ENCODE measurements at regions of chr1 and their contacts with region 1.

Region 1: GRCh38 chr1:41573785-41574713 is 89.6 kb upstream of the EDN2 start:
- DNase-seq: peak; percentile 34
- H3K4me3 ChIP-seq: no peak overlapping the region
- CTCF ChIP-seq: peak; percentile 93

Region 2: DNA sequence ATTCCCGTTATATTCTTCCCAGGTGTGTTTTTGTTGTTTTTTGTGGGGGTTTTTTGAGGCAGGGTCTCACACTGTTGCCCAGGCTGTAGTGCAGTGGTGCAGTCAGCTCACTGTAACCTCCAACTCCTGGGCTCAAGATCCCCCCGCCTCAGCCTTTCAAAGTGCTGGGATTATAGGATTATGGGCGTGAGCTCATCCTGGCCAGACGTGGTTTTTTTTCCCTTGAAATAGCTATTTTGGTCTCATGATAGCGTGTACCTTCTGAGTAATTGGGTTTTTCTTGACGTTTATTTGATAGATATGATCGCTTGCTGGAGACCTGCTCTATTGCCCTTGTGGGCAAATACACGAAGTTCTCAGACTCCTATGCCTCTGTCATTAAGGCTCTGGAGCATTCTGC is 577.0 kb before region 1 on chr1:
- CTCF ChIA-PET with region 1: no interaction called
- POLR2A ChIA-PET with region 1: no interaction called
- DNase-seq: no peak
- H3K4me3 ChIP-seq: no peak overlapping the region
- CTCF ChIP-seq: no peak

Region 3: DNA sequence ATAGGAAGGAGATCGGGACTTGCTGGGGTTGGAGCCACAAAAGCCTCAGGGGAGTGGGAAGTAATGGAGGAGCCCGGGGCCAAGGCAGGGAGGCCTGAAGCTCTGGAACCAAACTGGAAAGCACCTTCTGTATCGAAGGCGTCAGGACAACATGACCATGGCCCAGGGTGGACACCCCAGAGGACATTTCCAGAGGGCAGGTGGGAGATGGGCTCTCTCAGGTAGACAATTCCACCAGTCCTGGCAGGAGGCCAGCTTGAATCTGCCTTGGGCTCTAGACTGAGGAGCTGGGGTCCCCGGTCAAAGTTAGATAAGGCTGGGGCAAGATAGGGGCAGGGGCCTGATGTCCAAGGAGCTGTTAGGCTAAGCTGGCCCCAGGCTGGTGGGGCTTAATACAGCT is 15.3 kb after region 1 on chr1:
- CTCF ChIA-PET with region 1: interaction called, 17 read pairs
- POLR2A ChIA-PET with region 1: no interaction called
- DNase-seq: no peak
- H3K4me3 ChIP-seq: no peak overlapping the region
- CTCF ChIP-seq: no peak

Region 4: GRCh38 chr1:41673378-41673777 is 99.3 kb after region 1 on chr1:
- CTCF ChIA-PET with region 1: interaction called, 10 read pairs
- POLR2A ChIA-PET with region 1: no interaction called
- DNase-seq: no peak
- H3K4me3 ChIP-seq: no peak overlapping the region; the same call in 1 of the 2 replicates
- CTCF ChIP-seq: no peak

Region 5: DNA sequence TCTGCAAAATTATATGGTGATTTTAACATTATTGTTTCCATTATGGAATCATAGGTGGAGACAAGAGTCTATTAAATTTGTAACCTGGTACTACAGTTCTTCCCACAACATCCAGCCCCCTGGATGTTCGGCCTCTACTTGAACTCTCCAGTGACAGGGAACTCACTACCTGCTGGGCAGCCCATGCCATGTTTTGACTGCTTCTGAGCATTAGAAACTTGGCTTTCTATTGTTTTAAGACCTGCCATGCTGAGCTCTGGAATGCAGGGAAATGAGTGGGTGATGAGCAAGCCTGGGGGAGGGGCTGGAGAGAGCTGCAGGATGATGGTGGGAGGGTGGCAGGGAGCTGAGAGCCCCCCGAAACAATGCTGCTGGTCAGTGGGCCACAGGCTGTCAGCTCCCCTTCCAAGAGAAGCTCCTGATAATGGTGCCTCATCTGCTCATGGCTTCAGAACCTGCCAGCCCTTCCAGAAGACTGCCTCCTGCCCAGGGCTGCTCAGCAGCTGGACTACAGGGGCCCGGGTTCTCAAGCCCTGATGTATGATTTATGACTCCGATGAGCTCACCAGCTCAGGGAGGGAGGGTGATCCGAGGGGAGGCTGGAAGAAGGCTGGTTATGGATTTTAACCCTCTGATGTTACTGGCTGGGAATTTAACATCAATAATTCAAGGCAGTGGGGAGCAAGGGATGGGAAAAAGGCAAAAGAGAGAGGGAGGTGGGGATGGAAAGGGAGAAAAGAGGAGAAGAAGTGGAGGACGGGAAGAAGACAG is 139.7 kb after region 1 on chr1:
- CTCF ChIA-PET with region 1: no interaction called
- POLR2A ChIA-PET with region 1: no interaction called
- DNase-seq: no peak
- H3K4me3 ChIP-seq: no peak overlapping the region
- CTCF ChIP-seq: no peak

Region 6: DNA sequence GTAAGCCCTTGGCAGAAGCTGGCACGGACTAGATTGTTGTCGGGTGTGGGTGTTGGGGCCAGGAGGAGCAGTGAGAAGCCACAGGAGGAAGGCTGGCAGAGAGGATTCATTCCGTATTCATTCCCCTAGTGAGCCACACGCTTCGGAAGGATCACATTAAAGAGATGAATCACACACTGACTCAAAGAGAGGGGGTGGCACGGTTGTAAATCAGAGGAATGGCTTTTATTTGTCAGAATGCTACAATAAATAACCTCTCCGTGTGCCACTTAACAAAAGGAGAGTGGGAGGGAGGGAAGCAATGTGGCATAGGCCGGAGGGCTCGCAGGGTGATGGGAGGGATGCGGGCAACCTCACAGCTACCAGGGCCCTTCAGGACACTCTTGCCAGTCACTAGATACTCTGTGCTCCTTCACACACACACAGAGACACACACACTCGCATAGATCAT is 209.2 kb after region 1 on chr1:
- CTCF ChIA-PET with region 1: interaction called, 21 read pairs
- POLR2A ChIA-PET with region 1: no interaction called
- DNase-seq: peak; percentile 62
- H3K4me3 ChIP-seq: peak overlapping the region; percentile 15; the same call in 1 of the 2 replicates
- CTCF ChIP-seq: no peak

Region 7: DNA sequence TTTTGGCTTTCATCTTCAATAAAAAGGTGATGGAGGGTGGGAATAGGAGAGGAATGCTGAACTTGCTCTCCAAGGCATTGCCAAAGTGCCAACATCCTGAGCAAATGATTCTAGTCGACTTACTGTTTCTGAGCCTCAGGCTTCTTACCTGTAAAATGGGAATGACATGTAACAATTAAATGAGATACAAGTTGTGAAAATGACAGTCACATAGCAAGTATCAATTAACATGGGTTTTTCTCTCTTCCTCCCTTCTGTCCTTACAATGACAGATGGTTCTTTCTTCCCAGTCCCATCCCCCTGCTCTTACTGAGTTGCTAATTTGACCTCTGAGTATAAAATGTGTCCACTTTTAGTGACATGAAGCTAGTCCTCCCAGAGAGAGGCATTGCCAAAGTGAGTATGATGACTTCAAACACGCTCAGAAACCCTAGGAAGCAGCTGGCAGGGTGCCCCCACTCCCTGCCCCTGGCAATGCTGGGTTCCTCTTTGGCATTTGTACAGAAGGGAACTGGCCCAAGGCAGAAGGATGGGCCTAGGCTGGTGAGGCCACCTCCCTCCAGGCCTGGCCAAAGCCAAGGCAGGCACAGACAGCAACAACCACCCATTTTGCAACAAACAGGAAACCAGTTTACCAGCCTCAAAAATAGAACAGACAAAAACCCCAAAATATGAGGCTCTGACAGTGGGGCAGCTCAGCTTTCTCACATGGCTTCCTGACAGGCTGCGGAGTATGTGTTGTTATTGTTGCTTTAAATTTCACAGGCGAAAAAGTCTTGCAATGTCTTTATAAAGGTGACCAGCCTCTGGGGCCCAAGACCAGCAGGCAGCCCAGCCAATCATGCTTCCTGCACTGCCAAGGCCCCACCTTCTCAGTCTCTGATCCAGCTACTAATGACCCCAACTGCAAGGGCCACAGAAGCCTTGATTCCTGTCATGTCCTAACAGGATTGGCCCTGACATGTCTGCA is 228.8 kb after region 1 on chr1:
- CTCF ChIA-PET with region 1: interaction called, 88 read pairs
- POLR2A ChIA-PET with region 1: no interaction called
- DNase-seq: no peak
- H3K4me3 ChIP-seq: no peak overlapping the region
- CTCF ChIP-seq: no peak